PC-9 (cell line): ENCODE measurements at regions of chr7 and their contacts with region 1.

Region 1: GRCh38 chr7:2497500-2498336 is 21.5 kb upstream of the GRIFIN start:
- DNase-seq: no peak
- H3K4me3 ChIP-seq: no peak overlapping the region
- H3K27ac ChIP-seq: no peak overlapping the region
- H3K4me1 ChIP-seq: peaks cover 12% of the 10 kb centered on the region; the same call in 1 of the 2 replicates
- H3K27me3 ChIP-seq: peaks cover 35% of the 10 kb centered on the region
- CTCF ChIP-seq: no peak

Region 2: DNA sequence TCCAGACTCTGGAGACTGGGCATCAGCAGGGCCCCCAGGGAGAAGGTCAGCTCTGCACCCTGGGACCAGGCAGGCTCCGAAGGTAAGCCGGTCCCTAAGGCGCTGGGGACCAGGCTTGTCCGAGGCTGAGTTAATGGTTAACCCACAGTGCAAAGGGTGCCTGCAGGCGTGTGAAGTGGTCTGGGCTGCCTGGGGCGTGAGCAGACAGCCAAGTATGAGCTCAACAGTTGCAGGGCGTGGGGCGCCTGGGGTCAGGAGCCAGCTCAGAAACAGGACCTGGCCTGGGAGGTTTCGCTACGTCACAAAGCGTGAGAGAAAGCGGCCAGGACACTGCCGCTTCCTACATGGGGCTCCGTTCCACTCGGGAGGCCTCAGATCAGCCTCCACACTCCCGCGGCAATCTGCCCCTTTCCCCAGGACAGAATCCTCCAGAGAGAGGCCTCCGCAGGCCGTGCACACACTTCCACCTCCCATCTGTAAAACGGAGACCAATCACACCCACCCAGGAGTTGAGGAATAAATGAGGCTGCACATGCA is 1994.1 kb before region 1 on chr7:
- CTCF ChIA-PET with region 1: no interaction called
- POLR2A ChIA-PET with region 1: no interaction called
- intact Hi-C with region 1: no loop called
- DNase-seq: no peak
- H3K4me3 ChIP-seq: no peak overlapping the region
- H3K27ac ChIP-seq: no peak overlapping the region
- H3K4me1 ChIP-seq: no peaks in the 10 kb centered on the region
- H3K27me3 ChIP-seq: no peaks in the 10 kb centered on the region
- CTCF ChIP-seq: no peak

Region 3: DNA sequence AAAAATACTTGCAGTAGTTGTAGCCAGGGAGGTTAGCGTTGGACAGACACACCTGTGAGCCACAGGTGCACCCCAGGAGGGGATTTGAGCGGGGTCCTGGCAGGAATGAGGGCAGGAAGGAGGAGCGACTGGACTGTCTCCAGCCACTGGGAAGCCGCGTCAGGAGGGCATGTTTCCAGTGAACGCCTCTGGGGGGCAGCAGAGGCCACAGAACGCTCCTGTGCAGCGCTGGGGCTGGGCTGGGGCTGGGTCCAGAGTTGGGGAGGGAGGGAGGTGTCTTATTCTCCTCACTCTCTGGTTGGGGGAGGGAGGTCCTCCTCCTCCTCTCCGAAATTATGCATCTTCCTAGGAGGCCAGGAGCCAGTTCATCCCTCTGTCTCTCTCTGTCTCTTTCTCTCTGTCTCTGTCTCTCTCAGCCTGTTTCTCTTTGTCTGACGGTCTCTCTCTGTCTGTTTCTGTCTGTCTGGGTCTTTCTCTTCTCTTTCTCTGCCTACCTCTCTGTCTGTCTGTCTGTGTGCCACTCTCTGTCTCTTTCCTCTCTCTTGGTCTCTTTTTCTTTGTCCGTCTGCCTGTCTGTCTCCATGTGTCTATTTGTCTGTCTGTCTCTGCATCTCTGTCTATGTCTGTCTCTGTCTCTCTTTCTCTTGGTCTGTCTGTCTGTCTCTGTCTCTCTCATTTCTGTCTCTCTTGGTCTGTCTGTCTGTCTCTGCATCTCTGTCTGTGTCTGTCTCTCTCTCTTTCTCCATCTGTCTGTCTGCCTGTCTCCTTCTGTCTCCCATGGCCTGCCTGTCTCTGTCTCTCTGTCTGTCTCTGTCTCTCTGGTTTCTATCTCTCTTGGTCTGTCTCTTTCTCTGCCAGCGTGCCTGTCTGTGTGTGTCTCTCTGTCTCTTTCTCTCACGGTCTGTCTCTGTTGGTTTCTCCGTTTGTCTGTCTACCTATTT is 918.0 kb before region 1 on chr7:
- CTCF ChIA-PET with region 1: interaction called, 12 read pairs
- POLR2A ChIA-PET with region 1: no interaction called
- intact Hi-C with region 1: no loop called
- DNase-seq: peak in 1 of 2 experiments; percentile 78
- H3K4me3 ChIP-seq: no peak overlapping the region
- H3K27ac ChIP-seq: no peak overlapping the region
- H3K4me1 ChIP-seq: no peaks in the 10 kb centered on the region
- H3K27me3 ChIP-seq: peaks cover 8% of the 10 kb centered on the region
- CTCF ChIP-seq: peak; percentile 92

Region 4: DNA sequence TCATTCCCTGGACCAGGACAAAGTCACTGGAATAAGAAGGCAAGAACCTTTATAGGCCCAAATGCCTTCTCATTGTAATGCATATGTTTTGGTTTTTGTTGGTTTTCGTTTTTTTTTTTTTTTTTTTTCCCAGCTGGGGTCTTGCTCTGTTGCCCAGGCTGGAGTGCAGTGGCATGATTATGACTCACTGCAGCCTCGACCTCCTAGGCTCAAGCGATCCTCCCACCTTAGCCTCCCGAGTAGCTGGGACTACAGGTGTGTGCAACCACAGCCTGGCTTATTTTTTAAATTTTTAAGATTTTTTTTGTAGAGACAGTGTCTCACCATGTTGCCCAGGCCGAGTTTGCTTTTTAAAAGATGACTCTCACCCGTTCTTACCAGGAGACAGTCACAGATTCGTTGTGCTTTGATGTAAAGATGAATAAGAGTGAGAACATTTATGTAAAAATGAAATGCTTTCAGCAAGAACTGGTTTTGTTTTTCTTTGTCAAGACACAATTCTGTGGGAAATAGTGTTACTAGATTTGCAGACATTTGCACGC is 68.7 kb after region 1 on chr7:
- CTCF ChIA-PET with region 1: no interaction called
- POLR2A ChIA-PET with region 1: interaction called, 22 read pairs
- intact Hi-C with region 1: no loop called
- DNase-seq: no peak
- H3K4me3 ChIP-seq: no peak overlapping the region
- H3K27ac ChIP-seq: no peak overlapping the region
- H3K4me1 ChIP-seq: no peaks in the 10 kb centered on the region
- H3K27me3 ChIP-seq: no peaks in the 10 kb centered on the region
- CTCF ChIP-seq: no peak